Vagina (tissue), 2 donors: ENCODE measurements at regions of chr17 and their contacts with region 1.

Region 1: DNA sequence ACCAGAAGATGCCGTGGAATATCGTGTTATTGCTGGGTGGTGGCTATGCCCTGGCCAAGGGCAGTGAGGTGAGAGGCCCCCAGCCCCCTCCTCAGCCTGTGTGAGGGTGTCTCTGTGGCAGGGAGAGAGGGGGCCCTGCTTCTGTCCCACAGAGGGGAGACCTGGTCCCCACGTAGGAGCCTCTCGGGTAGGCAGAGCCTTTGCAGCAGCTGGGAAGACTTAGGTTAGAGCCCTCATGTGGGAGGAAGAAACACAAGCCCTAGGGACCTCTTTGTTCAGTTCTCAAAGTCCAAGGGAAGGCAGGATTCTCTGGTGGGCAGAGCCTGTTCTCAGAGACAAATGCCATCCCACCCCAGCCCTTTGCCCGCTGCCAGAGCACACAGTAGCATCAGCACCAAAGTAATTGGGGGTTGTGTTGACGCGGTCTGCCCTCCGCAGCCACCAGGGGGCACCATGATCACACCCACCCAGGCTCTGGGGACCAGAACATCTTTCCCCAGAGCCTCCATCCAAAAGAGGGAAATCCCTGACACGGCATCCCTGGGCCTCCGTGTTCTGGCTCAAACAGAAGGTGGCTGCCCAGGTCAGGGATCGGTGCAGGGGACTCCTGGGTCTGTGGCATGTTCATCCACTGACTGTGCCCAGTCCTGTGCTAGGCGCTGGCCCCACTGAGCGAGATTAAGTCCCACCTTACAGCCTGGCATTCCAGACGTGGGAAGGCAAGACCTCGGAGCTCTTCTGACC is 11.5 kb upstream of the FOXN1 start:
- DNase-seq: no peak
- H3K4me3 ChIP-seq: no peak overlapping the region
- H3K27ac ChIP-seq: no peak overlapping the region
- H3K4me1 ChIP-seq: peaks cover 14% of the 10 kb centered on the region
- H3K27me3 ChIP-seq: no peaks in the 10 kb centered on the region
- CTCF ChIP-seq: peak; percentile 51 to 77 (median 73)
- POLR2A ChIP-seq: no peak

Region 2: DNA sequence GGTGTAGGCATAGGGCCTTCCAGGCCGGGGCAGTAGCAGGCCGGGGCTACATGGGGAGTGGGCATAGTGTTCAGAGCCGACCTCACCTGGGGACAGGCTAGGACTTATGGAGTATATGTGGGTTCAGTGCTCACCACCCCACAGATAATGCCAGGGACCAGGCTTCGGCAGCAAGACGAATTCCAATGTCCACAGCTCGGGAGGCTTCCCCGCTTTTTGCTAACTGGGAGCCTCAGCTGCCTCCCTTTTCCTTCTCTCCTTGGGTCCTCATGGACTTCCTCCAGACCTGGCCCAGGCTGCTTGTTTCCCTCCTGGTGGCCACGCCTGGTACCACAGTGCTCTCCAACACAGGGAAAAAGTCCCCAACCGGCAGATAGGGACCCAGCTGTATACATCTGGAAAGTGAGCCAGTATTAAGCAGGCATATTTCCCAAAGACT is 68.5 kb before region 1 on chr17:
- intact Hi-C with region 1: no loop called
- DNase-seq: no peak
- H3K4me3 ChIP-seq: no peak overlapping the region
- H3K27ac ChIP-seq: no peak overlapping the region
- H3K4me1 ChIP-seq: no peaks in the 10 kb centered on the region
- H3K27me3 ChIP-seq: no peaks in the 10 kb centered on the region
- CTCF ChIP-seq: no peak
- POLR2A ChIP-seq: no peak

Region 3: GRCh38 chr17:28612936-28613872 is 118.6 kb after region 1 on chr17:
- intact Hi-C with region 1: loop called (anchors 10 kb)
- DNase-seq: no peak
- H3K4me3 ChIP-seq: no peak overlapping the region
- H3K27ac ChIP-seq: no peak overlapping the region
- H3K4me1 ChIP-seq: no peaks in the 10 kb centered on the region
- H3K27me3 ChIP-seq: no peaks in the 10 kb centered on the region
- CTCF ChIP-seq: peak; percentile 9 to 39 (median 26)
- POLR2A ChIP-seq: no peak

Region 4: GRCh38 chr17:28698253-28698941 is 203.8 kb after region 1 on chr17:
- intact Hi-C with region 1: no loop called
- DNase-seq: no peak
- H3K4me3 ChIP-seq: no peak overlapping the region
- H3K27ac ChIP-seq: no peak overlapping the region
- H3K4me1 ChIP-seq: no peaks in the 10 kb centered on the region
- H3K27me3 ChIP-seq: no peaks in the 10 kb centered on the region
- CTCF ChIP-seq: no peak
- POLR2A ChIP-seq: no peak